Activated T-helper 2 cell treated with anti-CD3 and anti-CD28 coated beads, Interferon-gamma antibody, Interleukin-2, Interleukin-4, amounts not matched to agents 10 μg/mL and 5 μg/mL and 100 μg/mL, durations not matched to agents 14 hours and 24 hours and 36 hours (primary cell): ENCODE measurements at regions of chr3 and their contacts with region 1.

Region 1: DNA sequence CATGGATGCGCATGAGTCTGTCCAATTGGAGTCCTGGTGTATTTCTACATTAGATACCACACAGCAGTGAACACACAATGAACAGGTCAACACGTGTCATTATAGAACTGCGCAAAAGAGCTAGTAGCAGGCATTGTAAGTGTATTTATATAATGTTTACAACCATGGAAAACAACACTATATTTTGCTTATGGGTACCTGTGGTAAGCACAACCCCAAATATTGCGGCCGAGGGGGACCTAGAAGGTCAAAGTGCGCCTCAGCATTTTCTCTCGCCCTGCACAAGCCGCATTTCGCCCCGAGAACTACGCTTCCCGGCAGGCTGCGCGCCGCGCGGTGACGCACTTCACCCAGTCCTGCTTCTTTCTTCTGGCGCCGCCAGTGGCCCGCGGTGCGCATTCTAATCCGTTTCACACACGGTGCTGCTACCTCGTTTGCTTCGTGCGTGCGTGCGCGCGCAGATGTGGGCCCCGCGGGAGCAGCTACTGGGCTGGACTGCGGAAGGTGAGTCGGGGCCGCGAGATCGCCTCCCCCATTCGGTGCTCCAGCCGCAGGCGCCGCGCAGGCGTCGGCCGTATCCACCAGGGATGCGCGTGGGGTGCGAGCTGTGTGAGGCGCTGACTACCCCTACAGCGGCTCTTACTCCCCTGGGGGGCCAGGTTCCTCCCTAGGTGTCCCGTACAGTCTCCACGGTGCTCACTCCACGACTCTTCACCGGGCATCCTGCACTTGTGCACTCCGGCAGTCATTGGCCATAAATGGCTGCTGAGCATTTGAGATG is at the start of gene ZNF589:
- DNase-seq: peak; percentile 94
- H3K4me3 Mint-ChIP-seq: peak within 1 kb of the TSS; percentile 91
- H3K27ac Mint-ChIP-seq: peak within 1 kb of the TSS; percentile 96
- H3K4me1 Mint-ChIP-seq: peaks cover 20% of the 10 kb centered on the region
- H3K27me3 Mint-ChIP-seq: no peaks in the 10 kb centered on the region
- total RNA-seq, gene ZNF589: 40.2 and 42.8 TPM in 2 replicates

Region 2: DNA sequence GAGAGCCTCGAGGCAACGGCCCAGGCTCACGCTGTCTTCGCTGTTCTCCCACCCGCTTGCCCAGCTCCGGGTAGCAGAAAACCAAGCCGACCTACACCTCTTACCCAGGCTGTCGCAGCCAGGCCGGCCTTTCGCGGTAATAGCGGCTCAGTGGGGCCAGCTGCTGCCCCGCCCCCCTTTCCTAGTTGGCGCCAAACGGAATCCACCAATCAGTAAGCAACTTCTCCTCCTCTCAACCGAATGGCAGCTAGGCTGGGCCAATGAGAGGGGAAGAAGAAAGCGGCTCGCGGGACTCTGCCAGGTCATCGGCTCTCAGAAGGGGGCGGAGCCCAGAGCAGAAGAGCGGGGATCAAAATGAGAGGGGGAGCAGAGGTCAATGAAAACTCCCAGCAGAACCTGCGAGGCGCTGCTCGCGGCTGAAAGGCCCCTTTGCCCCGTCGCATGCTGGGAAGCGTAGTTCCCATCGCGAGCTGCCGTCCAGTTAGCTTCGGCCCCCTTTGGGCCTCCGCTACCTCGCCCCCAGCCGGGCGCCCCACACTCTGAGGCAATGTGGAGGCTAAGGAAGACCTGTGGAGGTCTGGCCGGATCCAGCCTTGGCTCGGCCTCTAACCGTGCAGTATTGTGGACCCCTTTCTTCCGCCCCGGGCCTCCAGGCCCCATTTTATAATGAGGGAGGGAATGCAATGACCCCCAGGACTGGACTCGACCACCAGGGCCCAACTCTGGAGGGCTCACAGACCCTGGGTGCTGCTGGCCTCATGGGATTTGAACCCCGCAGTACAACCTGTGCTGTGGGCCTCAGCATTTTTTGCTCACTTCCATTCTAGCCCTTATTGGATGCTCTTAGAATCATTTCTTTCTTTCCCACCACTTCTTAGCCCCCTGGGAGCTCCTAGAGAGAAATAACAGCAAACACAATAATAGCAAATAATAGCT is 52.4 kb before region 1 on chr3 and contains the start of gene CDC25A:
- intact Hi-C with region 1: loop called (anchors 1 kb)
- DNase-seq: peak; percentile 97
- H3K4me3 Mint-ChIP-seq: peak within 1 kb of the TSS; percentile 92
- H3K27ac Mint-ChIP-seq: peak within 1 kb of the TSS; percentile 86
- H3K4me1 Mint-ChIP-seq: peaks cover 23% of the 10 kb centered on the region
- H3K27me3 Mint-ChIP-seq: no peaks in the 10 kb centered on the region
- total RNA-seq, gene CDC25A: 39.1 and 40.5 TPM in 2 replicates

Region 3: DNA sequence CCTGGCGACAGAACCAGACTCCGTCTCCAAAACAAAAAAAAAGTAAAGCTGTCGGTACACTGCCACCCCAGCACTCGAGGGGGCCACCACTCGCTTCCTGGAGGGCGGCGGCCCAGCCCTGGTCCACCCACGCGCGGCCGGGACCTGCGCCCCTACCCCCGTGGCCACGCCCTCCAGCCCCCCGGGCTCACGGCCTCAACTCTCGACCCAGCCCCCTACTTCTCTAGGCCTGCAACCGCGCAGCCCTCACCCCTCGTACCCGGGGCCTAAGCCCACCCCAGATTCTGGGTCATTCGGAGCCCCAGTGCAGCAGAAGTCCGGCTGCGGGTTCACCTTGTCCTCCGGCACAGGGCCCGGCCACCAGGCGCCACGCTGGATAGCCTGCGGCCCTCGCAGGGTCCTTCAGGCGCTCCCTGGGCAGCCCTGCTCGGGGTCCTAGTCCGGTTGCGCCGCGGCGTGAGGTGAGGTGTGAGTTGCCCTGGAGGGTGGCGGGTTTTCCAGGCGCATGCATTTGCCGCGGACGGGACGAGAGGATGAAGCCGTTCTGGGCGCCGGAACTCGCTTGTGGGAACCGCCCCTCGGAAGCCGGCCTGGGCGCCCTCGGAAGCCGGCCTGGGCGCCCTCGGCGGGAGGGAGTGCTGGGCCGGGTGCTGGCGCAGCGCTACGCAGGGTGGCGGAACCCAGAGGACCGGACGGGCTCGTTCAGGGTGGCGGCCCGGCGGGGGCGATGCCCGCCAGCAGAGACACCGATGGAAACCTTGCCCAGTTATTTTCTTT is 60.3 kb after region 1 on chr3:
- intact Hi-C with region 1: loop called (anchors 2 kb)
- DNase-seq: peak; percentile 87
- H3K4me3 Mint-ChIP-seq: peak within 1 kb of the TSS; percentile 95
- H3K27ac Mint-ChIP-seq: peak within 1 kb of the TSS; percentile 98
- H3K4me1 Mint-ChIP-seq: peaks cover 26% of the 10 kb centered on the region
- H3K27me3 Mint-ChIP-seq: peaks cover 13% of the 10 kb centered on the region

Region 4: DNA sequence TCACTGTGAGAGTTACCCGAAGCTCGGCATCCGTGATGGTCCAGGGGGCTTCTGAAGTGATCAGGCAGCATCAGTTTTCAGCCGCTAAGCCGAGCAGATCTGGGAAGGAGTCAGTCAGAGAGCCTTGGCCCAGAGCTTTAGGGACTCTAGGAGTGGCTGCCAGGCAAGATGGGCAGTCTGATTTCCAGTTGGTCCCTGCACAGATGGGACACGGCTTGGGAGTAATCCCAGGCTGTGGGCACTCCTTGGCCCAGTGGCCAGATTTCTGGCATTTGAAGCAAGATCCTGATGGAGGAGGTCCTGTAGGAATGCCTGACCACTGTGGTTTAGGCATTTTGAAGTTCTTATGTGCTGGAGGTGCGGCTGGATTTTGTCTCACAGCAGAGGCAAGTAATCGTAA is 486.6 kb after region 1 on chr3:
- intact Hi-C with region 1: no loop called
- DNase-seq: no peak
- H3K4me3 Mint-ChIP-seq: no peak overlapping the region
- H3K27ac Mint-ChIP-seq: no peak overlapping the region
- H3K4me1 Mint-ChIP-seq: no peaks in the 10 kb centered on the region
- H3K27me3 Mint-ChIP-seq: peaks cover 11% of the 10 kb centered on the region